Right ventricle myocardium superior (tissue), 1 donor: ENCODE measurements at regions of chr7 and their contacts with region 1.

Region 1: GRCh38 chr7:668139-668931 is 58.2 kb upstream of the DNAAF5 start:
- DNase-seq: no peak
- ATAC-seq: peak; percentile 18

Region 2: DNA sequence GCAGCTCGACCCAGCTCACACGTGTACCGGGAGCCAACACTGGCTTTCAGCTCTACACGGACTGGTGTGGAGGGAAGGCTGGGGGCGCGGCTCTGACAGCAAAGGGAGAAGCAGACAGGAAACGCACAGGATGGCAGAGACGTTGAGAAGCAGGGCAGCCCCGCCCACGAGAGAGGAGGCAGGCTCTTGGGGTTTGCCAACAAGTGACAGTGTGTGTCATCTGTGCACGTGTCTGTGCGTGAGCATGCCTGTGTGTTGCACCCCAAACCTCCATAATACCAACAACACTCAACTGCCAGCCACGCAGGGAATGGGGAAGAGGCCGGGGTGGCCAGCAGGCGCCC is 84.2 kb before region 1 on chr7:
- intact Hi-C with region 1: no loop called
- DNase-seq: no peak
- ATAC-seq: no peak

Region 3: GRCh38 chr7:726084-726853 is 57.9 kb after region 1 on chr7 and contains the start of gene DNAAF5:
- intact Hi-C with region 1: loop called (anchors 5 kb)
- DNase-seq: peak; percentile 93
- ATAC-seq: peak; percentile 94
- total RNA-seq, gene DNAAF5: 19.3 TPM